Activated T-helper 2 cell treated with anti-CD3 and anti-CD28 coated beads, Interferon-gamma antibody, Interleukin-2, Interleukin-4, amounts not matched to agents 10 μg/mL and 5 μg/mL and 100 μg/mL, durations not matched to agents 14 hours and 24 hours and 36 hours (primary cell): ENCODE measurements at regions of chr6 and their contacts with region 1.

Region 1: GRCh38 chr6:134288538-134289203 is 29.2 kb downstream of the SGK1 start:
- DNase-seq: peak; percentile 15
- H3K4me3 Mint-ChIP-seq: peak overlapping the region; percentile 28
- H3K27ac Mint-ChIP-seq: peak overlapping the region; percentile 96
- H3K4me1 Mint-ChIP-seq: peaks cover 32% of the 10 kb centered on the region
- H3K27me3 Mint-ChIP-seq: no peaks in the 10 kb centered on the region

Region 2: GRCh38 chr6:134007077-134007476 is 281.6 kb before region 1 on chr6:
- intact Hi-C with region 1: no loop called
- DNase-seq: no peak
- H3K4me3 Mint-ChIP-seq: no peak overlapping the region
- H3K27ac Mint-ChIP-seq: no peak overlapping the region
- H3K4me1 Mint-ChIP-seq: peaks cover 10% of the 10 kb centered on the region
- H3K27me3 Mint-ChIP-seq: peaks cover 25% of the 10 kb centered on the region

Region 3: DNA sequence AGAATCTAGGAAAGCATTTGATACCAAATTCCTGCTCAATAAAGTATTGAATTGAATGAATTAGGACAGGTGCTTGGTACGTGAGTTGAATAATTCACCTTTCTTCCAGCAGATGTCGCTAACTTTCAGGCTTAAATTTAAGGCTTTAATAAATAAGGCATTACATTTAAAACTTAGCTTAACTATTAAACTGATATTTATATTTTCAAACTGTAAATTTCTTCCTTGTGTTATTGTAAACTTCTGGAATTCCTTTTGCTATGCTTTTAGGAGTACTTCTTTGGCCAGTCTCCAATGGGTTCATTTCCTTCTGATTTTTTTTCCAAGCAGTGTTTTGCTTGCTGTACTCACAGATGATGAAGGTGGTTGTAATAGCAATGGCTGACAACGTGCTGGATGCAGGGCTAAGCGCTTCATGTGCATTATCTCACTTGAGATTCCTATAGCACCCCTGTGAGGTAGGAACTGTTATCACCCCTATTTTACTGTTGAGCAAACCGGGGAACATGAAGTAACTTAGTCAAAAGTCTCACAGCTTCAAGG is 164.9 kb before region 1 on chr6:
- intact Hi-C with region 1: no loop called
- DNase-seq: no peak
- H3K4me3 Mint-ChIP-seq: no peak overlapping the region
- H3K27ac Mint-ChIP-seq: no peak overlapping the region
- H3K4me1 Mint-ChIP-seq: no peaks in the 10 kb centered on the region
- H3K27me3 Mint-ChIP-seq: peaks cover 4% of the 10 kb centered on the region

Region 4: GRCh38 chr6:134174672-134175198 is 113.9 kb before region 1 on chr6:
- intact Hi-C with region 1: loop called (anchors 1 kb)
- DNase-seq: peak; percentile 87
- H3K4me3 Mint-ChIP-seq: peak overlapping the region; percentile 98
- H3K27ac Mint-ChIP-seq: peak overlapping the region; percentile 97
- H3K4me1 Mint-ChIP-seq: peaks cover 48% of the 10 kb centered on the region
- H3K27me3 Mint-ChIP-seq: peaks cover 4% of the 10 kb centered on the region

Region 5: GRCh38 chr6:134235937-134236751 is 52.5 kb before region 1 on chr6:
- intact Hi-C with region 1: loop called (anchors 1 kb)
- DNase-seq: no peak
- H3K4me3 Mint-ChIP-seq: no peak overlapping the region
- H3K27ac Mint-ChIP-seq: peak overlapping the region; percentile 58
- H3K4me1 Mint-ChIP-seq: peaks cover 38% of the 10 kb centered on the region
- H3K27me3 Mint-ChIP-seq: no peaks in the 10 kb centered on the region

Region 6: GRCh38 chr6:134352786-134353480 is 64.3 kb after region 1 on chr6:
- intact Hi-C with region 1: loop called (anchors 2 kb)
- DNase-seq: no peak
- H3K4me3 Mint-ChIP-seq: no peak overlapping the region
- H3K27ac Mint-ChIP-seq: peak overlapping the region; percentile 75
- H3K4me1 Mint-ChIP-seq: peaks cover 26% of the 10 kb centered on the region
- H3K27me3 Mint-ChIP-seq: no peaks in the 10 kb centered on the region

Region 7: DNA sequence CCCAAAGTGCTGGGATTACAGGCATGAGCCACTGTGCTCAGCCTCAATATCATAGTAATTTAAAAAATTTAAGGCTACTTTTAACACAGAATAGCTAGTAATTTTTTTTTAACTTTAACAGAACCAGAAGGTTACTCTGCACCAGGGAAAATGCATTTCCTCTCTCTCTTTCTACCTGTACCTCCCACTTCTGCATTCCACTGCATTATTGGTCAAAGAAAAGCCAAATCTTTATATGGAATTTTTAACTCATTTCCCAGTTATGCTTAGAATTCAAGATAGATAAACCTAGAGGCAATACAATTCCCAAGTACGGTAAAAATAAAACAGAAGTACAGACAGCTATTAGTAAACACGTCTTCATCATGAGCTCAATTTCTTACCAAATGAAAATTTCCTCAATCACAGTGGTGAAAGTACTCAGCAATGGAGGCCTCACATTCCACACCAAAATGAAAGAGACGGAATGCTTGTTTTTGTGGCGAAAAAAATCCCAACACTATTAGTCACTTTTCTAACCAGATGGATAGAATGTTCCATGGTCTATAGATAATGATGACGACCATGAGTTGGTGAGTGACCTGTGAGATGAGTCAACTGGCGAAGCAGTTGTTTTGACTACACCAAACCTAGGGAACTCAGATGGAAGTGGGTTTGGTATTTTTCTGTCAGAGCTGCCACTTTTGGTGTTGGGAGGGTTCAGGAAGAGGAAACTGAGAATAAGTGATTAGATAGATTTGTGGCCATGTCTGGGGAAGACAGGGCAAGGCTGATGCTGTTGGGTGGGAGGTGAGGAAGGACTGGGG is 134.0 kb after region 1 on chr6:
- intact Hi-C with region 1: loop called (anchors 5 kb)
- DNase-seq: no peak
- H3K4me3 Mint-ChIP-seq: no peak overlapping the region
- H3K27ac Mint-ChIP-seq: no peak overlapping the region
- H3K4me1 Mint-ChIP-seq: peaks cover 15% of the 10 kb centered on the region
- H3K27me3 Mint-ChIP-seq: no peaks in the 10 kb centered on the region

Region 8: DNA sequence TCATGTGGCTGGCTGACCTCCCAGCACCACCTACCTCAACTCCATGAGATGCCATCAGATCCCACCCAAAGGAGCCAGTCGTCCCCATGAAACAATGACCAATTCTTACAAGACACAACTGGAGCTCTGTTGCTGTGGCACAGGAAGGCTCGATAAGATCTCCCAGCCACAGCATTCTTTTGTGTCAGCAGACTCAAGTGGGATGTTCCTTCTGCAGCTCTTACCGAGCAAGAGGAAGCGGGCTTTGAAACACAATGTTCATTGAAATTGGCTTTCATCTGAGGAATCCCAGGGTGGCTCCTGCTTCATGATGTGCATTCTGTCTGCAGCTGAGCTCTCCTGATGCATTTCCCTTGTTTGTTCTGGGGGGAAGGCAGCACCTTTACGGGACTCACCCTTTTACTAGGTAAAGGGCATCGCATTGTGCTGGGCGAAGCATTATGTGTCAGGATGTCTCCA is 251.2 kb after region 1 on chr6:
- intact Hi-C with region 1: loop called (anchors 2 kb)
- DNase-seq: peak; percentile 19
- H3K4me3 Mint-ChIP-seq: peak overlapping the region; percentile 65
- H3K27ac Mint-ChIP-seq: peak overlapping the region; percentile 23
- H3K4me1 Mint-ChIP-seq: peaks cover 36% of the 10 kb centered on the region
- H3K27me3 Mint-ChIP-seq: no peaks in the 10 kb centered on the region

Region 9: DNA sequence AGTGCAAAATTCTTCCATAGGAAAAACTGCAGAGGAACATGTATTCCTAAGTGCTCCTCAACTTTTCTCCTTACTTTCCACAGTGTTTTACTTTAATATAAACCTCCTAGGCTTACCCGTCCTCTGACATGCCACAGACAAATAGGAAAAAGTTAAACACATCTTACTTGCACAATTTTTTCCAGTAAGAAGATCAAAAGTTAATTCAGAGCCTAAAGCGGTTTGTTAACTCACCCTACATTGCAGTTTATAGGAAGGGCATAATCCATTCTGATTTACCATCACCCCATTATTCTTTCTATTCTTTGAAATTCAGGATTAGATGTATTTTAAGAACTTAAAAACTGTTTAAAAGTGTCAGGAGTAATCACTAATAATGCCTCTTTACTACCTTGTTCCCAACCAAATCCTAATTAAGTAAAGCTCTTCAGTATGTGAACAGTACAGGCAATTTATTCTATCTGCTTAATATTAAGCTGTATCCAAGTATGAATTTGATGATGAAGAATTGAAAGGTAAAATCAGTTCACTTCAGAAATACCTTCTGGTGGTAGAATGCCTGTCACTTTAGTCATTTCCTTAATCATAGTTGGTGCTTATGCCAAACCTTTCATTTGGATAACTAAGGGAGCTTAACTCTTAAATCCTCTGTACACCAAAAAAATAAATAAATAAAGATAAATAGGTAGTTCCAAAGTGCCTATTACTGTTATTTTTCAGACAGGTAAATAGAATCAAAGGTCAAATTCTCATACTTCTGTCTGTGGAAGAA is 369.3 kb after region 1 on chr6:
- intact Hi-C with region 1: no loop called
- DNase-seq: no peak
- H3K4me3 Mint-ChIP-seq: no peak overlapping the region
- H3K27ac Mint-ChIP-seq: no peak overlapping the region
- H3K4me1 Mint-ChIP-seq: no peaks in the 10 kb centered on the region
- H3K27me3 Mint-ChIP-seq: peaks cover 15% of the 10 kb centered on the region

Region 10: DNA sequence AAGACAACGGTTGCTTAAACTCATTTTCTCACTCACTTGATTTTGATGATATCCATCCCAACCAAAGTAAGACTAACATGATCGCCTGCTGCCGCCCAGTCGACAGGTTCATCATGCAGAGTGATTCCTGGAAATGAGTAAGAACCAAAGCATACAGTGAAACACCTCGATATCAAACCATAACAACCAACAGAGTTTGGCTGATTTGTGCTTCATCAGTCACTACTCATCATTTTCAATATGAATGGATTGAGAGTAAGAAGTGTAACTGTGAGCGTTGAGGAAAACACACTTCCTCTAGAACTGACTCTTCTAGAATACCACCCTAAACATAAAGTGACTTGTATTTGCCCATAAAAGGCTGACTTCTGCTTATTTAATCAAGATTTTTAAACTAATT is 690.5 kb after region 1 on chr6:
- intact Hi-C with region 1: loop called (anchors 2 kb)
- DNase-seq: peak; percentile 55
- H3K4me3 Mint-ChIP-seq: peak overlapping the region; percentile 57
- H3K27ac Mint-ChIP-seq: peak overlapping the region; percentile 78
- H3K4me1 Mint-ChIP-seq: peaks cover 52% of the 10 kb centered on the region
- H3K27me3 Mint-ChIP-seq: no peaks in the 10 kb centered on the region